Activated B cell treated with CpG ODN at 0.5 μM for 24 hours (primary cell): ENCODE measurements at regions of chr1 and their contacts with region 1.

Region 1: GRCh38 chr1:175319418-175320230 is 127.0 kb upstream of the KIAA0040 start:
- DNase-seq: peak; percentile 50
- ATAC-seq: peak; percentile 87
- H3K4me3 Mint-ChIP-seq: peak overlapping the region; percentile 76
- H3K27ac Mint-ChIP-seq: peak overlapping the region; percentile 42
- H3K4me1 Mint-ChIP-seq: peaks cover 29% of the 10 kb centered on the region
- H3K27me3 Mint-ChIP-seq: no peaks in the 10 kb centered on the region
- CTCF ChIP-seq: no peak

Region 2: GRCh38 chr1:175089136-175089718 is 230.4 kb before region 1 on chr1:
- CTCF ChIA-PET with region 1: no interaction called
- POLR2A ChIA-PET with region 1: no interaction called
- intact Hi-C with region 1: no loop called
- DNase-seq: no peak
- ATAC-seq: no peak
- H3K4me3 Mint-ChIP-seq: no peak overlapping the region
- H3K27ac Mint-ChIP-seq: no peak overlapping the region
- H3K4me1 Mint-ChIP-seq: no peaks in the 10 kb centered on the region
- H3K27me3 Mint-ChIP-seq: peaks cover 4% of the 10 kb centered on the region
- CTCF ChIP-seq: no peak

Region 3: GRCh38 chr1:175162955-175163354 is 156.7 kb before region 1 on chr1:
- CTCF ChIA-PET with region 1: interaction called, 303 read pairs
- POLR2A ChIA-PET with region 1: no interaction called
- intact Hi-C with region 1: no loop called
- DNase-seq: no peak
- ATAC-seq: no peak
- H3K4me3 Mint-ChIP-seq: no peak overlapping the region
- H3K27ac Mint-ChIP-seq: peak overlapping the region; percentile 47
- H3K4me1 Mint-ChIP-seq: peaks cover 12% of the 10 kb centered on the region
- H3K27me3 Mint-ChIP-seq: no peaks in the 10 kb centered on the region
- CTCF ChIP-seq: no peak

Region 4: GRCh38 chr1:175186433-175187142 is 133.0 kb before region 1 on chr1:
- CTCF ChIA-PET with region 1: interaction called, 18 read pairs
- POLR2A ChIA-PET with region 1: interaction called, 3 read pairs
- intact Hi-C with region 1: loop called (anchors 2 kb)
- DNase-seq: no peak
- ATAC-seq: no peak
- H3K4me3 Mint-ChIP-seq: peak overlapping the region; percentile 72
- H3K27ac Mint-ChIP-seq: peak overlapping the region; percentile 97
- H3K4me1 Mint-ChIP-seq: peaks cover 100% of the 10 kb centered on the region
- H3K27me3 Mint-ChIP-seq: no peaks in the 10 kb centered on the region
- CTCF ChIP-seq: no peak

Region 5: GRCh38 chr1:175208773-175209492 is 110.7 kb before region 1 on chr1:
- CTCF ChIA-PET with region 1: interaction called, 16 read pairs
- POLR2A ChIA-PET with region 1: interaction called, 4 read pairs
- intact Hi-C with region 1: no loop called
- DNase-seq: no peak
- ATAC-seq: peak; percentile 84
- H3K4me3 Mint-ChIP-seq: peak overlapping the region; percentile 80
- H3K27ac Mint-ChIP-seq: peak overlapping the region; percentile 98
- H3K4me1 Mint-ChIP-seq: peaks cover 64% of the 10 kb centered on the region
- H3K27me3 Mint-ChIP-seq: no peaks in the 10 kb centered on the region
- CTCF ChIP-seq: no peak

Region 6: GRCh38 chr1:175274368-175274767 is 45.3 kb before region 1 on chr1:
- CTCF ChIA-PET with region 1: interaction called, 4 read pairs
- POLR2A ChIA-PET with region 1: no interaction called
- intact Hi-C with region 1: loop called (anchors 5 kb)
- DNase-seq: no peak
- ATAC-seq: peak; percentile 84
- H3K4me3 Mint-ChIP-seq: no peak overlapping the region
- H3K27ac Mint-ChIP-seq: no peak overlapping the region
- H3K4me1 Mint-ChIP-seq: peaks cover 6% of the 10 kb centered on the region
- H3K27me3 Mint-ChIP-seq: no peaks in the 10 kb centered on the region
- CTCF ChIP-seq: no peak

Region 7: DNA sequence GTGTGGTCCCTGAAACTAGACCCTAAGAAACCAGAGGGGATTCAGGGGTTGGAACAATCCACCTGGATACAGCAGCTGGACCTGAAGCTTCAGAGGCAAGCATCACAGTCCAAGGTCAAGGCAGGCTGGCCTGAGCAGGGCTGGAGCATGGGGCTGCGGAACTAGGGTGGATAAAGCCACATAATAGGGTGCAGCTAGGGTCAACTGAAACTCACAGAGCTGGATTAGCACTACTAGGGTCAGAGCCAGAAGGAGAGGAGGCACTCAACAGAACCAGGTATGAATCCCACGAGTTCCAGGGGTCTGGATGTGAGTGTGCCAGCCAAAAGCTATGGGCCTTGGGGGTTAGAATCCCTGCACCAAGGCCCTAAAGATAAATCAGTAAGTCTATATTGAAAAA is 104.0 kb after region 1 on chr1:
- CTCF ChIA-PET with region 1: no interaction called
- POLR2A ChIA-PET with region 1: no interaction called
- intact Hi-C with region 1: no loop called
- DNase-seq: no peak
- ATAC-seq: no peak
- H3K4me3 Mint-ChIP-seq: no peak overlapping the region
- H3K27ac Mint-ChIP-seq: no peak overlapping the region
- H3K4me1 Mint-ChIP-seq: no peaks in the 10 kb centered on the region
- H3K27me3 Mint-ChIP-seq: peaks cover 3% of the 10 kb centered on the region
- CTCF ChIP-seq: no peak

Region 8: GRCh38 chr1:175471039-175471800 is 151.6 kb after region 1 on chr1:
- CTCF ChIA-PET with region 1: no interaction called
- POLR2A ChIA-PET with region 1: no interaction called
- intact Hi-C with region 1: no loop called
- DNase-seq: no peak
- ATAC-seq: no peak
- H3K4me3 Mint-ChIP-seq: no peak overlapping the region
- H3K27ac Mint-ChIP-seq: no peak overlapping the region
- H3K4me1 Mint-ChIP-seq: no peaks in the 10 kb centered on the region
- H3K27me3 Mint-ChIP-seq: no peaks in the 10 kb centered on the region
- CTCF ChIP-seq: no peak